Activated naive CD4-positive, alpha-beta T cell treated with anti-CD3 and anti-CD28 coated beads for 36 hours (primary cell): ENCODE measurements at regions of chr12 and their contacts with region 1.

Region 1: GRCh38 chr12:51326762-51327439 is 2.9 kb upstream of the BIN2 start:
- DNase-seq: peak; percentile 37
- H3K4me3 Mint-ChIP-seq: peak overlapping the region; percentile 65
- H3K27ac Mint-ChIP-seq: peak overlapping the region; percentile 91
- H3K4me1 Mint-ChIP-seq: peaks cover 72% of the 10 kb centered on the region
- H3K27me3 Mint-ChIP-seq: no peaks in the 10 kb centered on the region

Region 2: GRCh38 chr12:50400598-50401364 is 926.1 kb before region 1 on chr12 and contains the start of gene LARP4:
- CTCF ChIA-PET with region 1: no interaction called
- intact Hi-C with region 1: loop called (anchors 10 kb)
- DNase-seq: peak; percentile 94
- H3K4me3 Mint-ChIP-seq: peak within 1 kb of the TSS; percentile 99
- H3K27ac Mint-ChIP-seq: peak within 1 kb of the TSS; percentile 87
- H3K4me1 Mint-ChIP-seq: peaks cover 19% of the 10 kb centered on the region
- H3K27me3 Mint-ChIP-seq: peaks cover 2% of the 10 kb centered on the region
- total RNA-seq, gene LARP4: 44.7 to 44.9 TPM

Region 3: GRCh38 chr12:50763639-50764285 is 563.1 kb before region 1 on chr12 and contains the start of gene ATF1:
- CTCF ChIA-PET with region 1: no interaction called
- intact Hi-C with region 1: loop called (anchors 10 kb)
- DNase-seq: peak; percentile 91
- H3K4me3 Mint-ChIP-seq: peak within 1 kb of the TSS; percentile 83
- H3K27ac Mint-ChIP-seq: peak within 1 kb of the TSS; percentile 94
- H3K4me1 Mint-ChIP-seq: peaks cover 33% of the 10 kb centered on the region
- H3K27me3 Mint-ChIP-seq: no peaks in the 10 kb centered on the region
- total RNA-seq, gene ATF1: 43.3 to 48.5 TPM

Region 4: GRCh38 chr12:51083126-51083833 is 243.6 kb before region 1 on chr12 and contains the start of gene CSRNP2:
- CTCF ChIA-PET with region 1: no interaction called
- intact Hi-C with region 1: loop called (anchors 1 kb)
- DNase-seq: peak; percentile 96
- H3K4me3 Mint-ChIP-seq: peak within 1 kb of the TSS; percentile 94
- H3K27ac Mint-ChIP-seq: peak within 1 kb of the TSS; percentile 70
- H3K4me1 Mint-ChIP-seq: peaks cover 35% of the 10 kb centered on the region
- H3K27me3 Mint-ChIP-seq: no peaks in the 10 kb centered on the region
- total RNA-seq, gene CSRNP2: 8.4 to 11.0 TPM

Region 5: DNA sequence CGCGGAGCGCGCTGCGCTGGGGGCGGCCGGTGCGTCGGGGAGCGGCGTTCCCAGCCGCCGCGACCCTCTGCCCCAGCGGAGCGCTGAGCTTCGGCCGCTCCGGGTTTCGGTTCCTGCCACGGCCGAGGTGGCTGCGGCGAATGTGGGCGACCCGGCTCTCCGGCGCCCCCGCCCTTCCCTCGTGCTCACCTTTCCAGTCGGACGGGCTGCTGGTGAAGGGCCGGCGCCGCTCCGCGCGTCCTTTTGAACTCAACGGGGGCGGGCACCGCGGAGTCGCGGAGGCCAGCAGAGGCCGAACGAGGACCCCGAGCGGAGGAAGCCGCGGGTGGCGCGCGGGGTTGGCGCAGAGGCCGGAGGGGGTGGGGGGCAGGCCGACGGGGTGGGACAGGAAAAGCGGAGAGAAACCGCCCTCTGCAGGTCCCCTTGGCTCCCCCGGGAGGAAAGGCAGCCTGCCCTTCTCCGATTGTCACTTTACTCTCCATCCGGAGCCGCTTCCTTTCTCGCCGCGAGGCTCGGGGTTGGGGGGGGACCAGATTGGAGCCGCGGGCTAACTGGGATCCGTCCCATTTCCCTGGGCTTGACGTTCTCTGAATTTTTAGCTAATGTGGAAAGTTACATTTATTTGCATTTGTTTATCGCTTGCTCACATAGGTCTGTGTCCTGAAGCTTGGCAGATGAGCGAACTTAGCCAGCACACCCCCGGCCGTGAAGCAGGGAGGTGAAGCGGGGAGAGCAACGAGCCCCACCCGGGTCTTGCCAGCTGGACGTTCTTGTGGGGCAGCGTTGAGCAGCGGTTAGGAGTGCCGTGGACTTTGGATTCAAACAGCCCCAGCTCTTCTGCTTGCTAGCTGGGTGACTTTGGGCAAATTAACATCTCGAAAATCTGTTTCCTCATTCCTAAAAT is 56.6 kb before region 1 on chr12 and contains the start of gene SMAGP:
- CTCF ChIA-PET with region 1: interaction called, 11 read pairs
- intact Hi-C with region 1: loop called (anchors 5 kb)
- DNase-seq: peak; percentile 51
- H3K4me3 Mint-ChIP-seq: peak within 1 kb of the TSS; percentile 83
- H3K27ac Mint-ChIP-seq: no peak within 1 kb of the TSS
- H3K4me1 Mint-ChIP-seq: peaks cover 20% of the 10 kb centered on the region
- H3K27me3 Mint-ChIP-seq: peaks cover 8% of the 10 kb centered on the region
- total RNA-seq, gene SMAGP: 0.54 to 1.2 TPM

Region 6: GRCh38 chr12:51368640-51369517 is 42.0 kb after region 1 on chr12:
- CTCF ChIA-PET with region 1: no interaction called
- intact Hi-C with region 1: loop called (anchors 1 kb)
- DNase-seq: peak; percentile 97
- H3K4me3 Mint-ChIP-seq: peak overlapping the region; percentile 37
- H3K27ac Mint-ChIP-seq: peak overlapping the region; percentile 86
- H3K4me1 Mint-ChIP-seq: peaks cover 41% of the 10 kb centered on the region
- H3K27me3 Mint-ChIP-seq: no peaks in the 10 kb centered on the region